Endothelial cell of umbilical vein (primary cell): ENCODE measurements at regions of chr17 and their contacts with region 1.

Region 1: GRCh38 chr17:2094891-2095535 is 40.1 kb downstream of the HIC1 start:
- DNase-seq: peak; percentile 78
- H3K4me3 ChIP-seq: no peak overlapping the region
- H3K27ac ChIP-seq: no peak overlapping the region
- H3K4me1 ChIP-seq: peaks cover 15% of the 10 kb centered on the region
- H3K27me3 ChIP-seq: no peaks in the 10 kb centered on the region
- CTCF ChIP-seq: peak; percentile 39 to 77
- POLR2A ChIP-seq: no peak

Region 2: DNA sequence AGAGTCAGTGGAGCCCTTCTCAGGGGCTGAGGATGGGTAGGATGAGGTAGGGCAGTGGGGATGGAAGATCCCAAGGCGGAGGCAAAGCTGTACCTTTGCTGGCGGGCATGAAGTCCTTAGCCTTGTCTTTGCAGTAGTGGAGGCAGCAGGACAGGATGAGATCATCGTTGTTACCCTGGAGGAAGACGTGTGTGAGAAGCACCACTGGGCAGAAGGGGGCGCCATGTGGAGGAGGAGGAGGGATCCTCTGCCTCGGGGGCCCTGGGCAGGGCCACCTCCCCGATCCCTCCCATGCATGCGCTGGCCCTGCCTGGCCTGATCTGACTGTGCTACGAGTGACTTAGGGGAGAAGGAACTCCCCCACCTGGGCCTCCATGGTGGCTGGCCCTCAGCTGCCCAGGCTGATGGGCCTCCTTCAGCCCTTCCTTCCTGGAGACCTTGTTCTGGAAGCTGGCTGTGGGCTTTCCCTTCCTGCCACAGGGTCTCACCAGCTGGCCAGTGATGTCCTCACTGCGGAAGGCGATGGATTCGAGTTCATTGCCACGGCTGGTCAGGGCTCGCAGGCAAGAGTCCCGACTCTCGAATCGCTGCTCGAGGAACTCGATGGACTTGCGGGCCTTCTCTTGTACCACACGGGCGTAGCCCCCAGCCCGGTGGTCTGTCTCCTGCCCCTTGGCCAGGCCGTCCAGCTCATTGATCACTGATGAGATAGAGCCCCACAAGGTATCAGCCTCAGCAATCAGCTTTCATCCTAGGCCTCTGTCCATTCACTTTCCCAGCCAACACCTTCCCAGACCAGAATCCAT is 29.8 kb before region 1 on chr17:
- CTCF ChIA-PET with region 1: interaction called, 21 read pairs
- POLR2A ChIA-PET with region 1: no interaction called
- dilution Hi-C with region 1: no loop called
- intact Hi-C with region 1: loop called (anchors 1 kb)
- DNase-seq: peak; percentile 79
- H3K4me3 ChIP-seq: no peak overlapping the region
- H3K27ac ChIP-seq: peak overlapping the region; percentile 78
- H3K4me1 ChIP-seq: peaks cover 53% of the 10 kb centered on the region
- H3K27me3 ChIP-seq: no peaks in the 10 kb centered on the region
- CTCF ChIP-seq: peak; percentile 66 to 70
- POLR2A ChIP-seq: no peak

Region 3: DNA sequence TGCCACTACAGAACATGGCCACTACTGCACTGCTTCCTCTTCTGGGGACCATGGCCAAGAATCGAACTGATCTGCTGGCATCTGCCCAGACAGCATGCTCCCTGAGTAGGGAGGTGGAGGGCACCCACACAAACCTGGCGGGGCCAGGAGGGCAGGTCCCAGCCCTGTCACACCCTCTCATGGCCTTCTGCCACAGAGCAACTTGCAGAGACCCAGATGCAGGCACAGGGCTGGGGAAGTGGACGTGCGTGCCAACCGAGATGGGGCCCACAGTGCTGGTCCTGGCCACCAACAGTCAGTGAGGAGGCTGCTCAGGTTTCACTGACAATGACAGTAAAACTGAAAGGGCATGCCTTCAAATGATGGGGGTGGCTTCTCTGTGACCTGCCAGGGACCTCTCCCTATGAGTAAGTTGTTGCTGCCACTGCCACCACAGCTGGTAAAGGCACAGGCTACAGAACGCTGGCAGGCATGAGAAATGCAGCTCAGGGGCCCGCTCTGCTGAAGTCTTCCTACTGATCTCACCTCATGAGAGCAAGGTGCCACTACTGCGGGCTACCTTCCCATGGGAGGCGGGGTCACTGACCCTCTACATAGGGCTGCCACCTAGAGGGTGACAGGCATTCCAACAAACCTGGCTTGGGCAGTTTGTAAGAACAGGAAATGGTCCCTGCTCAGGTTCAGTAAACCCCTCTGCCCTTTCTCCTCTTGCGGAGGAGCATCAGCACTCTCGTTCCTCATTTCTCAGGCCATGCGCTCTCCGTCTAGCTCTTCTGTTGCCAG is 24.6 kb before region 1 on chr17:
- CTCF ChIA-PET with region 1: interaction called, 21 read pairs
- POLR2A ChIA-PET with region 1: no interaction called
- dilution Hi-C with region 1: no loop called
- intact Hi-C with region 1: loop called (anchors 1 kb)
- DNase-seq: no peak
- H3K4me3 ChIP-seq: no peak overlapping the region
- H3K27ac ChIP-seq: peak overlapping the region; percentile 93
- H3K4me1 ChIP-seq: peaks cover 62% of the 10 kb centered on the region
- H3K27me3 ChIP-seq: no peaks in the 10 kb centered on the region
- CTCF ChIP-seq: no peak
- POLR2A ChIP-seq: no peak

Region 4: DNA sequence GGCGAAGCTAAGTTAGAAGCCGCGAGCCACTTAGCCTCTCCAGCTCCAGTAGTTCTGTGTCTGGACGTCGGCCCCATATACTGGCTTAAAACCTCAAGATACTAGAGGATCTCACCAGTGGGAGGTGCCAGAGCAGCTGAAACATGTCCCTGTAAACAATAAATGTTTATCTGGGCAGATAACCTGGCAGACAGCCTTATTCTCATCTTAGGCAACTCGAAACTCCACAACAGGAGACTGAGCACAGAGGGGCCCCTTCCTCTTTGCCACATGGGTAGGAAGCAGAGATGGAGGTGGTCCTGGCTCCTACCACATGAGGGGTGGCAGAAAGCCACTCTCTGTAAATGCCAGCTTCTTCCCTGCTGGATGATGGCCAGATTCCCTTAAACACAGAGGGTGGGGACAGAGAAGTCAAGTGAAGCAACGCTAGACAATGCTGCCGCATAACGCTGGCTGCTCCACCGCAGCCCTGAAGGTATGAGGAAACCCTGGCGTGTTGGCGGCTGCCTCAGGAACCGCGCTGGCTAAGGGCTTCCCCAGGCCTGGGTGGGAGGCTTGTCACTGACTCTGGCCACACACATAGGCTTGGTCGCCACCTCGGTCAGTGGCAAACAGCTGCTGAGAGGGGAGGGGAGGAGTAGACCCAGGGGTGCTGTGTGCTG is 27.8 kb after region 1 on chr17:
- CTCF ChIA-PET with region 1: interaction called, 21 read pairs
- POLR2A ChIA-PET with region 1: no interaction called
- dilution Hi-C with region 1: no loop called
- intact Hi-C with region 1: no loop called
- DNase-seq: peak; percentile 73
- H3K4me3 ChIP-seq: no peak overlapping the region
- H3K27ac ChIP-seq: peak overlapping the region; percentile 0
- H3K4me1 ChIP-seq: peaks cover 24% of the 10 kb centered on the region
- H3K27me3 ChIP-seq: no peaks in the 10 kb centered on the region
- CTCF ChIP-seq: no peak
- POLR2A ChIP-seq: no peak

Region 5: GRCh38 chr17:2179615-2180295 is 84.7 kb after region 1 on chr17:
- CTCF ChIA-PET with region 1: interaction called, 14 read pairs
- POLR2A ChIA-PET with region 1: interaction called, 4 read pairs
- dilution Hi-C with region 1: no loop called
- intact Hi-C with region 1: loop called (anchors 1 kb)
- DNase-seq: peak; percentile 98
- H3K4me3 ChIP-seq: no peak overlapping the region
- H3K27ac ChIP-seq: peak overlapping the region; percentile 94
- H3K4me1 ChIP-seq: peaks cover 75% of the 10 kb centered on the region
- H3K27me3 ChIP-seq: no peaks in the 10 kb centered on the region
- CTCF ChIP-seq: no peak
- POLR2A ChIP-seq: peak; percentile 29